Prostate gland (tissue), 2 donors: ENCODE measurements at regions of chr1 and their contacts with region 1.

Region 1: DNA sequence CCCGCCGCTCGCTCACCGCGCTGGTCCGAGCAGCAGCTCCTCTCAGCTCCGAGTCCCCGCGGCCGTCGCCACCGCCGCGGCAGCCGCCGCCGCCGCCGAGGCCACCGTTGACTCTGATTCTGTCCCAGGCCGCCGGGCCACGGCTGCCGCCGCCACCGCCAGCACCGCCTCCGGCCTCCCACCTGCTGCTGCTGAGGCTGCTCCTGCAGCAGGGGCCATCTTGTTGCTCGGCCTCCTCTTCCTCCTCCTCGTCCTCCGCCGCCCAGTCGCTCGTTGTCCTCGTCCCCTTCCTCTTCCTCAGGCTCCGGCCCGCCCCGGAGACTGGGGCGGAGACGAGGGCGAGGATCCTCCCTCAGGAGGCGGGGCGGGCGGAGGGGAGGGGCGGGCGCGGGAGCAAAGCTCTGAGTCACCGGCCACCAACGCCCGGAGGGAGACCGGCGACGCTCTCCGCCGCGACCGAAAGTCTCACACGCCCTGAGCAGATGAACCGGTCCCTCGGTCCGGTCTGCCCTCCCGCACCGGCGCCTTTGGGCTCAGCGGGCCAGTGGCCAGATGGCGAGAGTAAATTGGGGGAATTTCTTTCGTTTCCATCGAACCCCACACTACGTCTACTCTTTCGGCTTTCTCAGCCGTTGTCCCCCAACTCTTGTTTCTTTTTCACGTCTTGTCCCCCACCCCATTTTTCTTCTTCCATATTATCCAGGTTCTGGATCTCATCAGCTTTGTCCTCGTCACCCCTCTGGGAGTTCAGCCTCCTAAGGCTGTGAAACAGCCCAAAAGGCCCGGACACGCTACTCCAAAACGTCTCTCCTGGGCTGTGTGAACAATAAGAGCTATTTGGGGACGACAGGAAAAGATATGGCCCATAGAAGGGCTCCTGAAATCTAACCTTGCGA is at the start of gene RC3H1:
- DNase-seq: peak; percentile 93
- H3K4me3 ChIP-seq: peak within 1 kb of the TSS; percentile 96 to 99
- H3K27ac ChIP-seq: peak within 1 kb of the TSS; percentile 97
- H3K4me1 ChIP-seq: peaks cover 4% of the 10 kb centered on the region
- H3K27me3 ChIP-seq: no peaks in the 10 kb centered on the region
- CTCF ChIP-seq: peak in 1 of 4 experiments; percentile 4
- POLR2A ChIP-seq: peak; percentile 94
- total RNA-seq, gene RC3H1: 20.3 to 34.1 TPM

Region 2: DNA sequence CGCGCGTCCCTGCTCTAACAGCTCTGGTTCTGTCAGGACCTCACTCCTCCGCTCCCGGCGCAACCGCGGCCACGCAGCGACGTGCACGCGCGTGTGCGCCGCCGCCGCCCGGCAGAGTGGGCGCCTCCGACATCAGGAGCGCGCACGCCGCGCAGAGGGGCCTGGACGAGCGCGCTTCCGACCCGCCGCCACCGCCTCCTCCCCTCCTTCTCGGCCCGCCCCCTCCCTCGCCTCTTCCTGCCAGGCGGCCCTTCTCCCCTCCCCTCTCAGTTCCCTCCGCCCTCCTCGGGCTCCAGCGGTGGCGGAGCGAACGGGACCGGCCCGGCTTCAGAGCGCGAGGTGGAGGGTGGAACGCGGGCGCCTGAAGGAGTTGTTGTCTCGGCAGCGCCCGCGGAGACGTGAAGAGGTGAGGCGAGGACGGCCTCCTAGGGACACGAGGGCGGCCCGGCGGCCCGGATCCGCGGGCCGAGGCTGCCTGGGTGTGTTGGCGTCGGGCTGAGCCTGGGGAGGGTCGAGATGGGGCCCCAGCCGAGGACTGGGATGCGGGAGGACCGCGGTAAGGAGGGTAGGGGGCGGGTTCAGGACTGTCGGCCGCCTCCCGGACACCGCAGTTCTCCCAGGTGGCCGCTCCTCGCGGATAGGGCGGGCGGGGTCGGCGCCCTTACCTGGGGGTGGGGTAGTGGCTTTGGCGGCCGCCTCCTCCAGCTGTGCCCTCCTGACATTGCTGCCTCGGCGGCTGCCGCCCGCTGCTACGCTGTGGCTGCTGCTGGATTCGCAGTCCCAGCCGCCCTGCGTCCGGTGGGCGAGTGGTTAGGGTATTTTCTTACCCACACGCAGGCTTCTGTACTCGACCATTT is 137.2 kb after region 1 on chr1 and contains the start of gene RABGAP1L:
- intact Hi-C with region 1: loop called (anchors 5 kb)
- DNase-seq: peak; percentile 95
- H3K4me3 ChIP-seq: peak within 1 kb of the TSS; percentile 74 to 96
- H3K27ac ChIP-seq: peak within 1 kb of the TSS; percentile 88 to 96
- H3K4me1 ChIP-seq: no peaks in the 10 kb centered on the region
- H3K27me3 ChIP-seq: no peaks in the 10 kb centered on the region
- CTCF ChIP-seq: peak in 1 of 4 experiments; percentile 4
- POLR2A ChIP-seq: peak; percentile 81
- total RNA-seq, gene RABGAP1L: 32.3 to 41.5 TPM